Common myeloid progenitor, CD34-positive (primary cell): ENCODE measurements at regions of chr6 and their contacts with region 1.

Region 1: DNA sequence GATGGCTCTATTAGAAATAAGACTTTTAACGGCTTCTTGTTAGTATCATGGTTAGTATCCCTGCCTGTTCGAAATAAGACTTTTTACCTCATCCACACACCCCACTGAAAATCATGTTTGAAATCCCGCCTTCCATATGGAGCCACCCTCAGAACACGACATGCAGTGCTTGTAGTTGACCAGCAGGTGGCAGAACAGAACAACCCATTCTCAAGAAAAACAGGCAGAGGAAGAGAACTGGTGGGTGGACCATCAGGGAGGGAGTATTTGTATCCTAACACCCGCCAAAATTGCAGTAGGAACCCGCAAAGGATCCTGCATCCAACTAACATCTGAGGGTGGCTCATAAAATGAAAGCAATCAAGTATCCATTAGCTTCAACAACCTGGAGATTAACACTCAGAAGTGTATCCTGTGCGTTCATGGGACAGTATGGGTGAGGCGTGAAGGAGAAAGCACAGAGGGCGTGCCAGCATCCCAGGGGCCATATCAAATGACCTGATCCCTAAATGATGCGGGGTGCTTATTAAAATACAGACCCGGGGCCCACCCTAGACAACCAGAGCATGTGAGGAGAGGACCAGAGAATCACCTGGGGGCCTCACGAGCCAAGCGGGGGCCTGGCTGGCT is 89.6 kb upstream of the NHSL1 start:
- DNase-seq: peak; percentile 79 to 86 (median 80)
- H3K4me3 ChIP-seq: no peak overlapping the region
- H3K27ac ChIP-seq: no peak overlapping the region
- H3K4me1 ChIP-seq: peaks cover 9 to 38% (median 22%) of the 10 kb centered on the region in 4 experiments
- H3K27me3 ChIP-seq: no peaks in the 10 kb centered on the region

Region 2: GRCh38 chr6:138572167-138572865 is 16.6 kb before region 1 on chr6:
- CTCF ChIA-PET with region 1: interaction called, 19 read pairs
- POLR2A ChIA-PET with region 1: no interaction called
- DNase-seq: peak; percentile 40 to 85 (median 73)
- H3K4me3 ChIP-seq: peak overlapping the region in 5 of 7 experiments; percentile 47 to 76 (median 60)
- H3K27ac ChIP-seq: no peak overlapping the region
- H3K4me1 ChIP-seq: peaks cover 0 to 11% (median 7%) of the 10 kb centered on the region in 4 experiments
- H3K27me3 ChIP-seq: peaks cover 0 to 3% (median 0%) of the 10 kb centered on the region in 5 experiments

Region 3: GRCh38 chr6:138577151-138577915 is 11.6 kb before region 1 on chr6:
- CTCF ChIA-PET with region 1: interaction called, 19 read pairs
- POLR2A ChIA-PET with region 1: no interaction called
- DNase-seq: no peak
- H3K4me3 ChIP-seq: no peak overlapping the region
- H3K27ac ChIP-seq: no peak overlapping the region
- H3K4me1 ChIP-seq: peaks cover 0 to 7% (median 2%) of the 10 kb centered on the region in 4 experiments
- H3K27me3 ChIP-seq: no peaks in the 10 kb centered on the region

Region 4: DNA sequence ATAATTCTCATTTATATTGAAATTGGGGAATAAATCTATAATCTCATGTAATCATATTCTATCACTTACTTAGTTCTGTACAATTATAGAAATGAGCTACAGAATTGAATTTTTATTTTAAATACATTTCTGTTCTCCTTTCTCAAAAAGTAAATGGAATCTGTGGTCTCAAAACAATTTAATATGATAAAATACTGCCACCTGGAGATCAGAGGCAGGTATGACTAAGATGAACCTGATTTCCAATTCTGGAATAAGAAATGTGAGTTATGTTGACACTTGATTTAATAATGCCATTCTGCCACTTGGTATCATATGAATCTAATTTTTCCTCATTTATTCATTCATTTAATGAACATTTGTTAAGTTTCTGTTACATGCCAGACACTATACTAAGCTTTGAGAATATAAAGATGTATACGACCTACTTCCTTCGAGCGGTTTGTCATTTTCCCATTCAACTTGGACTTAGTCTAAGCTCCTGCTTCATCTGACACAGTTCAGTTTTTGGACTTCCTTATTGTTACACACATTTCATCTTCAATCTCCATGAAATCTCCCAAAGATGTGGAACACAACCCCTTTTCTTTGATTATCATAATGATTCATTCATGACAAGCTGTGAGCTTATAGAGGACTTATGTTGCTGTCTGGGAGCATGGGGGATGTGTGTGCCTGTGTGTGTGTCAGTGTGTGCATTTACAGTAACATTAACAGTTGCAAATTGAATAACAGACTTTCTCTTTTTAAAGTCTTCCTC is 177.2 kb after region 1 on chr6:
- CTCF ChIA-PET with region 1: interaction called, 192 read pairs
- POLR2A ChIA-PET with region 1: no interaction called
- DNase-seq: peak; percentile 49 to 79 (median 73)
- H3K4me3 ChIP-seq: no peak overlapping the region
- H3K27ac ChIP-seq: no peak overlapping the region
- H3K4me1 ChIP-seq: peaks cover 6 to 24% (median 17%) of the 10 kb centered on the region in 4 experiments
- H3K27me3 ChIP-seq: no peaks in the 10 kb centered on the region